H1 (cell line): ENCODE measurements at regions of chr11 and their contacts with region 1.

Region 1: GRCh38 chr11:94897330-94897768 is 76.0 kb downstream of the CWC15 start:
- DNase-seq: peak in 1 of 2 experiments; percentile 73
- H3K4me3 ChIP-seq: no peak overlapping the region
- H3K27ac ChIP-seq: no peak overlapping the region
- H3K4me1 ChIP-seq: no peaks in the 10 kb centered on the region
- H3K27me3 ChIP-seq: no peaks in the 10 kb centered on the region
- CTCF ChIP-seq: peak; percentile 35 to 82 (median 82)
- EP300 ChIP-seq: no peak
- POLR2A ChIP-seq: no peak
- RAD21 ChIP-seq: peak; percentile 85 to 87

Region 2: GRCh38 chr11:93817426-93818348 is 1079.7 kb before region 1 on chr11:
- CTCF ChIA-PET with region 1: interaction called, 10 read pairs
- POLR2A ChIA-PET with region 1: no interaction called
- DNase-seq: no peak
- H3K4me3 ChIP-seq: no peak overlapping the region
- H3K27ac ChIP-seq: no peak overlapping the region
- H3K4me1 ChIP-seq: peaks cover 3 to 15% (median 6%) of the 10 kb centered on the region in 4 experiments
- H3K27me3 ChIP-seq: no peaks in the 10 kb centered on the region
- CTCF ChIP-seq: no peak
- EP300 ChIP-seq: no peak
- POLR2A ChIP-seq: no peak
- RAD21 ChIP-seq: no peak

Region 3: DNA sequence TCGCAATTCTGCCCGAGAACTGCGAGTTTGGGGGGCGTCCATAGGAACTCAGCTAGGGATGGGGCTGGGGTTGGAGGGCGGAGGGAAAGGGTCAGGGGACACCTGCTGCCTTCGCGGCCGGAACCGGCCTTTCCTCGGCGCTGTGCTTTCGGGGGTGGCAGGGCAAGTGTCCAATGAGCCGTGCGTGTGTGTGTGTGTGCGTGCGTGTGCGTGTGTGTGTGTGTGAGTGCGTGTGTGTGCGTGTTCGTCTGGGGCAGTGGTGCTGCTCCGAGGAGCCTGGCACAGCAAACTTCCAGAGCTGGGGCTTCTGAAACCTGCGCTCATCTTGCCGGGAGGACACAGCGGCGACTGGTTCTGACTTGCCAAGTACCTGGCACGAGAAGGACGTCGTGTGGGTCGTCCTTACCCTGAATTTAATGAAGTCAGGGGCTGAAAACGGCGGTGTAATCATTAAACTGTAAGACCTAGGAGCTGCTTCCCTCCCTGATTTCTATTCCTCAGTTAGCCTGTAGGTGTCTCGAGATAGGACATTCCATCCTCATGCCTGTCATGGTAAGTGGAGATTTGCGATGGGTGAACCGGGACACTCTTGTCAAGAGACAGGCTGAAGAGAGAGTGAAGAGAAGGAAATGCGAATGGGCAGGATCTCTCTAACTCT is 156.2 kb before region 1 on chr11:
- CTCF ChIA-PET with region 1: interaction called, 10 read pairs
- POLR2A ChIA-PET with region 1: no interaction called
- DNase-seq: peak in 1 of 2 experiments; percentile 62
- H3K4me3 ChIP-seq: peak overlapping the region; percentile 61 to 69 (median 67)
- H3K27ac ChIP-seq: no peak overlapping the region
- H3K4me1 ChIP-seq: peaks cover 0 to 17% (median 7%) of the 10 kb centered on the region in 4 experiments; a peak in 6 of 7 replicates
- H3K27me3 ChIP-seq: peaks cover 0 to 31% (median 19%) of the 10 kb centered on the region in 4 experiments; a peak in 6 of 7 replicates
- CTCF ChIP-seq: peak in 2 of 3 experiments; percentile 38 to 66; a peak in 2 of 4 replicates
- EP300 ChIP-seq: no peak
- POLR2A ChIP-seq: no peak
- RAD21 ChIP-seq: peak; percentile 43 to 49

Region 4: GRCh38 chr11:94885133-94885532 is 12.2 kb before region 1 on chr11:
- CTCF ChIA-PET with region 1: interaction called, 48 read pairs
- POLR2A ChIA-PET with region 1: interaction called, 4 read pairs
- DNase-seq: no peak
- H3K4me3 ChIP-seq: no peak overlapping the region
- H3K27ac ChIP-seq: no peak overlapping the region
- H3K4me1 ChIP-seq: peaks cover 0 to 3% (median 0%) of the 10 kb centered on the region in 4 experiments; a peak in 1 of 7 replicates
- H3K27me3 ChIP-seq: no peaks in the 10 kb centered on the region
- CTCF ChIP-seq: no peak
- EP300 ChIP-seq: no peak
- POLR2A ChIP-seq: no peak
- RAD21 ChIP-seq: no peak

Region 5: DNA sequence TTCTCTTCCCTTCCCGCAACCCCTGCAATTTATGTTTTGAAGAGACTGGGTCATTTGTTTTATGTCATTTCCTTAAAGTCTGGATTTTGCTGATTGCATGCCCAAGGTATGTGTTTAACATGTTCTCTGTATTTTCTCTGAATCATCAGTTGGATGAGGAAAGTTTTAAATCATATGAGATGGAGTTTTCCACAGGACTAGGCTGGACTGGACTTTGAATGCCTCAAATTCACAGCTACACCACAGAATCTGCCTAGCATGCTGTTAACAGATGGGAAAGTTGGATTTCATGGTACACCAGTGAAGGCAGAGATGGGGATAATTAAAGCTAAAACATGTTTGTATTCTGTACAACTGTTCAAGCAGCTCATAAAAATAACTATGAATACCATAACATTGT is 13.4 kb after region 1 on chr11:
- CTCF ChIA-PET with region 1: interaction called, 21 read pairs
- POLR2A ChIA-PET with region 1: no interaction called
- DNase-seq: no peak
- H3K4me3 ChIP-seq: no peak overlapping the region
- H3K27ac ChIP-seq: no peak overlapping the region
- H3K4me1 ChIP-seq: peaks cover 0 to 3% (median 0%) of the 10 kb centered on the region in 4 experiments; a peak in 1 of 7 replicates
- H3K27me3 ChIP-seq: peaks cover 0 to 1% (median 0%) of the 10 kb centered on the region in 4 experiments; a peak in 1 of 7 replicates
- CTCF ChIP-seq: no peak
- EP300 ChIP-seq: no peak
- POLR2A ChIP-seq: no peak
- RAD21 ChIP-seq: no peak

Region 6: DNA sequence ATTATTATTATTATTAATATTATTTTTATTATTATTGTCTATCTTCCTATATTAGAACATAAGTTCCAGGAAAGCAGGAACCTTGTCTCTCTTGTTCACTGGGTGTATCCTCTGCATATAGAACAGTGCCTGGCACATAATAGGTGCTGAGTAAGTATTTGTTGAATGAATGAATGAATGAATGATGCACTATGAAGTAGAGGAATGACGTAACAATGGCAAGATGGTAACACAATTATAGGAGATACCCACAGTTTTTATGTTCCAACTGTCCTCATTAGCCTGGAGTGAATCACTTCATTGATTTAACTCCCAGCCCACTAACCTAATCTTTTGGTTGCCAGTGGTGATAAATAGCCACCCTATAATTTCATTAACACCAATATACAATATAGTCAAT is 78.2 kb after region 1 on chr11:
- CTCF ChIA-PET with region 1: no interaction called
- POLR2A ChIA-PET with region 1: no interaction called
- DNase-seq: no peak
- H3K4me3 ChIP-seq: no peak overlapping the region
- H3K27ac ChIP-seq: no peak overlapping the region
- H3K4me1 ChIP-seq: peaks cover 0 to 2% (median 0%) of the 10 kb centered on the region in 4 experiments; a peak in 2 of 7 replicates
- H3K27me3 ChIP-seq: no peaks in the 10 kb centered on the region
- CTCF ChIP-seq: no peak
- EP300 ChIP-seq: no peak
- POLR2A ChIP-seq: no peak
- RAD21 ChIP-seq: no peak